Left cardiac atrium (tissue), 4 donors: ENCODE measurements at regions of chr9 and their contacts with region 1.

Region 1: GRCh38 chr9:16396389-16396788 is 474.1 kb downstream of the BNC2 start:
- DNase-seq: no peak
- ATAC-seq: no peak

Region 2: DNA sequence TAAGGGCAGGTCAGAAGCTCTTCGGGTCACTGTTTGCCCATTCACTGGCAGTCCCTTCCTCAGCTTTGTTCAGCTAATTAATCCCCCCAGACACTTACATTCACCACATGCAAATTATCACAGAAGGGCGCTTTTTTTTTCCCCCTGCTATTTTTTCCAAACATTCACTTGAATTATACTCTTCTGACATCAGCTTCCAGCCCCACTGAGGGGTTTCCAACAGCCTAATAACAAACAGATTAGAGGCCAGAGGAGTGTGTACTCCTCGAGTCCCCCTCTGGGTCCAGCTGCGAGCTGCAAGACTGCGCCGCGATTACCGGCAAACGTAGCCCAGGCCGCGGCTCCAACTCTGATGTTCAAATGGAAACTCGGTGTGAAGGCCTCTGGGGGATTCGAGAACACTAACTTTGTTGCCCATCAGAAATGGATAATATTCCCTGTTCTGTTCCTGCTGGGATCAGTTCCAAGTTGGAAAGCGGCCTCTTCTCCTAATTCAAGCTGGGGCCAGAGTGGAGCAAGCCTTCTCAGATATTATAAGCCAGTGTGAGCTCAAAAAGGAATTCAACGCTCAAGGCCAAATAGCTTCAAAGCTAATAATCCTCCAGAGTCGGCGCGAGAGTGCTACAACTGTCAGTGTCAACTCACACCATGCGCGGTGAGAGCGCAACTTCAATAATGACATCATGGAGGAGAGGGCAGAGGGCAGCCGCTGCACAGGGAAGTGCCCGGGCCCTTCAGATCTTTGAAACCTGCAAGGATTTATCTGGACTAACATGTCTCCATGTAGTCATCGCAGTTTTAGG is 86.7 kb before region 1 on chr9:
- intact Hi-C with region 1: no loop called
- DNase-seq: peak; percentile 45
- ATAC-seq: peak; percentile 71 to 85

Region 3: GRCh38 chr9:16335788-16336580 is 60.4 kb before region 1 on chr9:
- intact Hi-C with region 1: loop called in 1 of 2 experiments (anchors 10 kb)
- DNase-seq: peak; percentile 76
- ATAC-seq: peak; percentile 82 to 95